Lower leg skin (tissue), 4 donors: ENCODE measurements at regions of chr10 and their contacts with region 1.

Region 1: GRCh38 chr10:132371641-132372081 is 25.3 kb upstream of the PWWP2B start:
- DNase-seq: peak in 1 of 2 donors; percentile 81
- H3K4me3 ChIP-seq: no peak overlapping the region
- CTCF ChIP-seq: no peak
- POLR2A ChIP-seq: no peak

Region 2: DNA sequence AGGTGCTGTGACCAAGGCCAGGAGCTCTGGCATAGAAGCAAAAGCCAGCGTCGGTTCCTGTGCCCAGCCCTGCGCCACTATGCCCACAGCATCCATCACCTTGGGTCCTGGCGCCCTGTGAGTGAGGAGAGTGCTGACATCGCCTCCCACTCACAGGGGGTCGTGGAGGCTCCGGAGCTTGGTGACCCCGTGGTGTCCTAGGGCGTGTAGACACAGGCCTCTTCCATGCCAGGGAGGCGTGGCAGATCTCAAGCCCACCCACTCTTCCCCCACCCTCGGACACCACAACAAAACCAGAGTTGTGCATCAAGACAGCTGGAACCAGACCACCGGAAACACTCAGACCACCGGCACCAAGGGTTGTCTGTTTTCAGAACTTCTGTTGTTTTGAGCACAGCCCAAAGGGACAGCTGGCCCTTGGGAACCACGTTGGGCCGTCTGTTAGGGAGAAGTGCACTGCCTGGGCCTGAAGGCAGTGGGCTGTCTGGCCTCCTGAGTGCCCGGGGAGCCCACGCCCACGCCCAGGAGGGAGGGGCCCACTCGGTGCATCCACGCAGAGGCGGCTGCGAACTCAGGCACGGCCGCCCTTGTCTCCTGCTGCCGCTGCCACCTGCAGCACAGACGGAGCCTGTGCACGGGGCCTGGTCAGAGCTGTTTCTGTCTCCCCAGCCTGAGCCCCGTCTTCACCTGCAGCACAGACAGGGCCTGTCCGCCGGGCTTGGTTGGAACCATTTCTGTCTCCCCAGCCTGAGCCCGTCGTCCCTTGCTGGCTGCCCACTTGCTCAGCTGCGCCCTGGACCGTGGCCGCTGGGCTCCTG is 272.3 kb after region 1 on chr10:
- intact Hi-C with region 1: loop called (anchors 10 kb)
- DNase-seq: peak in 1 of 2 donors; percentile 73
- H3K4me3 ChIP-seq: no peak overlapping the region
- CTCF ChIP-seq: no peak
- POLR2A ChIP-seq: no peak